PC-3 (cell line): ENCODE measurements at regions of chr10 and their contacts with region 1.

Region 1: DNA sequence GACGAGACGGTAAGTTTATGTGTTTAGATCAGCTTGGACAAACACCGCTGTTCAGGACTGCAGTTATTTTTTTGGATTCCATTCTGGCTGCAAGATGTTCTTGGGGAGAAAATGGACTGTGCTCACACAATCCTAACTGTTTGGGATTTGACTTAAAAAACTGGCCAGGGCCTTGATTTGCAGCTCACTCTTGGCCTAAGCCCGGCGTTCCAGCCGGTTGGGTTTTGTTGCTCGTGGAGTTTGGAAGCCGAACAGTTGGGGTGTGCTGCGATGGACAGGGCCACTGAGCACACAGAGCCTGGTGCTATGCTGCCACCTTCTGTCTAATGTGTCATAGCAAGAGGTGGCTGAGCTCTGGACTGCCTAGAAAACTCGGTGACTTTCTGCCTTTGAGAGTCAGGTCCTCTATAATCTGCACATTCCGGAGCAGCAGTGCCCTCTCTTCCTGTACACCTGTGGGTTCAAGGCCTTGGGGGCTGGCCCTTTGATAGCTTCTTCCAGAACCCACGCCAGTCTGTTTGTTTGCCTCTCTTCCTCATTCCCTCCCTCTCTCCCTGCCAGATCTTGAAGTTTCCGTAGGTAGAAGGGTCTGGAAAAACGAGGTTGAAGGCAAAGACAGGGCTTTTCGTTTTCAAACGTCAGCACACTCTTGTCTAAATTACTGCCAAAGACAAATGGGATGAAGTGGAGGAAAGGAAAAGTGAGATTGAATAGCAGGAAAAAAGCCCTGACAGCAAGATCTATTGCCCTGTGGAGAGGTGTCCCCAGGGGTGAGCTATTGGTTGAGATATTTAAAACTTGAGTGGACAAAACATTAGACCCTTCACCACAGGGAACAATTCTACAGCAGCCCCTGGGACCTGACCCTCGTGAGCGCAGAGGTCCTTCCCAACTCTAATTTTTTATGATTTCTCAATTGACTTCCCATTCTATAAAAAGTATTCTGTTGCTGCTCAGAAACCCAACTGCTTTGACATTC is 167.5 kb upstream of the HABP2 start:
- DNase-seq: peak; percentile 86
- ATAC-seq: peak; percentile 91
- H3K4me3 ChIP-seq: peak overlapping the region; percentile 47
- H3K27ac ChIP-seq: peak overlapping the region; percentile 84
- H3K4me1 ChIP-seq: peaks cover 53% of the 10 kb centered on the region
- H3K27me3 ChIP-seq: no peaks in the 10 kb centered on the region
- CTCF ChIP-seq: peak; percentile 84

Region 2: GRCh38 chr10:112565434-112566053 is 819.8 kb before region 1 on chr10:
- CTCF ChIA-PET with region 1: no interaction called
- POLR2A ChIA-PET with region 1: no interaction called
- intact Hi-C with region 1: loop called (anchors 10 kb)
- DNase-seq: peak; percentile 83
- ATAC-seq: peak; percentile 54
- H3K4me3 ChIP-seq: no peak overlapping the region
- H3K27ac ChIP-seq: no peak overlapping the region
- H3K4me1 ChIP-seq: peaks cover 21% of the 10 kb centered on the region
- H3K27me3 ChIP-seq: no peaks in the 10 kb centered on the region
- CTCF ChIP-seq: peak; percentile 65

Region 3: GRCh38 chr10:113126229-113127201 is 258.8 kb before region 1 on chr10:
- CTCF ChIA-PET with region 1: no interaction called
- POLR2A ChIA-PET with region 1: no interaction called
- intact Hi-C with region 1: loop called (anchors 10 kb)
- DNase-seq: peak; percentile 73
- ATAC-seq: peak; percentile 99
- H3K4me3 ChIP-seq: peak overlapping the region; percentile 63
- H3K27ac ChIP-seq: no peak overlapping the region
- H3K4me1 ChIP-seq: peaks cover 13% of the 10 kb centered on the region
- H3K27me3 ChIP-seq: no peaks in the 10 kb centered on the region
- CTCF ChIP-seq: peak; percentile 61

Region 4: GRCh38 chr10:113326160-113327111 is 58.9 kb before region 1 on chr10:
- CTCF ChIA-PET with region 1: no interaction called
- POLR2A ChIA-PET with region 1: no interaction called
- intact Hi-C with region 1: loop called (anchors 1 kb)
- DNase-seq: peak; percentile 94
- ATAC-seq: peak; percentile 95
- H3K4me3 ChIP-seq: no peak overlapping the region
- H3K27ac ChIP-seq: peak overlapping the region; percentile 87
- H3K4me1 ChIP-seq: peaks cover 22% of the 10 kb centered on the region
- H3K27me3 ChIP-seq: no peaks in the 10 kb centered on the region
- CTCF ChIP-seq: peak; percentile 27; the same call in 1 of the 2 replicates

Region 5: DNA sequence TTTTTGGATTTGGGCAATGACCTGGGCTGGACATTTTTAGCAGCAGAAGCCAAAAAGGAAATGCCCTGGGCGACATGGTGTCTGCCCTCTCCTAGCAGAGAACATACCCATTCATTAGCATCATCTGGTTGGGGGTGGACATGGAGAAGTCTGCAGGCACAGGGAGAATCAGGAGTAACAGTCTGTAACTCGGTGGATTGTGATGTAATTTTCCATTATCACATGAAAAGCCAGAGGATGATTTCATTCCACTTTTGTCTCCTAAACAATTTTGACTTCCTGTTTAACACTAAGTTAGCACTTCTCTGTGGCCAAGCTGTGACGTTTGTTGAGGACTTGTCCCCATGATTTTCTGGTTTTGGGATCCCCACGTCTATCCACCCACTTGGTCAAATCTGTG is 13.8 kb after region 1 on chr10:
- CTCF ChIA-PET with region 1: no interaction called
- POLR2A ChIA-PET with region 1: no interaction called
- intact Hi-C with region 1: no loop called
- DNase-seq: no peak
- ATAC-seq: no peak
- H3K4me3 ChIP-seq: no peak overlapping the region
- H3K27ac ChIP-seq: no peak overlapping the region
- H3K4me1 ChIP-seq: no peaks in the 10 kb centered on the region
- H3K27me3 ChIP-seq: no peaks in the 10 kb centered on the region
- CTCF ChIP-seq: no peak

Region 6: GRCh38 chr10:113521123-113521795 is 135.9 kb after region 1 on chr10:
- CTCF ChIA-PET with region 1: no interaction called
- POLR2A ChIA-PET with region 1: no interaction called
- intact Hi-C with region 1: loop called (anchors 1 kb)
- DNase-seq: peak; percentile 79
- ATAC-seq: peak; percentile 81
- H3K4me3 ChIP-seq: no peak overlapping the region
- H3K27ac ChIP-seq: no peak overlapping the region
- H3K4me1 ChIP-seq: 0 out of 2 replicates have a peak, but pooled peaks cover 5% of the 10 kb centered on the region
- H3K27me3 ChIP-seq: no peaks in the 10 kb centered on the region
- CTCF ChIP-seq: peak; percentile 89